OCI-LY7 (cell line): ENCODE measurements at regions of chr6 and their contacts with region 1.

Region 1: GRCh38 chr6:105424175-105424783 is 21.4 kb upstream of the PREP start:
- DNase-seq: peak; percentile 70
- H3K4me3 ChIP-seq: no peak overlapping the region
- H3K27ac ChIP-seq: no peak overlapping the region
- H3K4me1 ChIP-seq: no peaks in the 10 kb centered on the region
- CTCF ChIP-seq: peak; percentile 90

Region 2: DNA sequence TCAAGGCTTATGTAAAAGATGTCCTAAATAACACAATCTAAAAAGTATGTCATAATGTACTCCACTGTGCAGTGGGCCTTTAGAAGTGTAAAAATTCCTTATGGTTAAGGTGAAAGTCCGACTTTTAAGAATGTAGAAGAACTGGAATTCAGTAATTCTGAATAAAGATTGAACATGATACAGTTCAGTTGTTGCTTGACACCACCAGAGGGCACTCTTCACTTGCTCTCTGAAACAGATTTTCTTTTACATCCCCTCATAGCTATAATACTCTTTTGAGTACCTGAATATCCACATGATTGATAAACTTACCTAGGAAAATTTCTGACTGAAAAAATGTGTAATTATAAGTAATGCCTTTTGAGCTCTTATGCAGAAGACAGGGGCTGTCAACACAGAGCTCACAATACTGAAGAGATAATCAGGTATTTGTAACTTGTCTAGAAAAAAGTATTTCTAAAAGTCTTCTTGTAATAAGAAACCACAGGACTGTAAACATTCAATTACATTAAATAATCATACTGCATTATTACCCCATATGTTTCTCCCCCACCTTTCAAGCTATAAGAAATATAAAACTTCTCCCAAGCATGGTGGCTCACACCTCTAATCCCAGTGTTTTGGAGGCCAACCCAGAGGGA is 336.6 kb before region 1 on chr6:
- CTCF ChIA-PET with region 1: no interaction called
- POLR2A ChIA-PET with region 1: interaction called, 6 read pairs
- intact Hi-C with region 1: loop called (anchors 1 kb)
- DNase-seq: peak; percentile 63
- H3K4me3 ChIP-seq: no peak overlapping the region
- H3K27ac ChIP-seq: no peak overlapping the region
- H3K4me1 ChIP-seq: no peaks in the 10 kb centered on the region
- CTCF ChIP-seq: peak; percentile 98